Activated B cell treated with CpG ODN at 0.5 μM for 24 hours (primary cell): ENCODE measurements at regions of chr6 and their contacts with region 1.

Region 1: GRCh38 chr6:165729307-165729936 is 66.4 kb upstream of the PDE10A start:
- DNase-seq: no peak
- ATAC-seq: no peak
- H3K4me3 Mint-ChIP-seq: no peak overlapping the region
- H3K27ac Mint-ChIP-seq: no peak overlapping the region
- H3K4me1 Mint-ChIP-seq: no peaks in the 10 kb centered on the region
- H3K27me3 Mint-ChIP-seq: peaks cover 4% of the 10 kb centered on the region
- CTCF ChIP-seq: no peak

Region 2: GRCh38 chr6:165850434-165851019 is 121.1 kb after region 1 on chr6:
- CTCF ChIA-PET with region 1: no interaction called
- POLR2A ChIA-PET with region 1: no interaction called
- intact Hi-C with region 1: loop called (anchors 1 kb)
- DNase-seq: peak; percentile 42
- ATAC-seq: peak; percentile 42
- H3K4me3 Mint-ChIP-seq: no peak overlapping the region
- H3K27ac Mint-ChIP-seq: no peak overlapping the region
- H3K4me1 Mint-ChIP-seq: no peaks in the 10 kb centered on the region
- H3K27me3 Mint-ChIP-seq: peaks cover 50% of the 10 kb centered on the region
- CTCF ChIP-seq: peak; percentile 72

Region 3: GRCh38 chr6:166106076-166106686 is 376.8 kb after region 1 on chr6:
- CTCF ChIA-PET with region 1: interaction called, 3 read pairs
- POLR2A ChIA-PET with region 1: no interaction called
- intact Hi-C with region 1: loop called (anchors 2 kb)
- DNase-seq: peak; percentile 26
- ATAC-seq: peak; percentile 45
- H3K4me3 Mint-ChIP-seq: peak overlapping the region; percentile 32
- H3K27ac Mint-ChIP-seq: no peak overlapping the region
- H3K4me1 Mint-ChIP-seq: peaks cover 5% of the 10 kb centered on the region
- H3K27me3 Mint-ChIP-seq: peaks cover 13% of the 10 kb centered on the region
- CTCF ChIP-seq: no peak